Activated CD4-positive, alpha-beta memory T cell treated with anti-CD3 and anti-CD28 coated beads for 36 hours (primary cell): ENCODE measurements at regions of chr22 and their contacts with region 1.

Region 1: GRCh38 chr22:37457093-37457893 is 28.9 kb downstream of the MFNG start:
- DNase-seq: peak; percentile 89
- H3K4me3 Mint-ChIP-seq: no peak overlapping the region
- H3K27ac Mint-ChIP-seq: no peak overlapping the region
- H3K4me1 Mint-ChIP-seq: no peaks in the 10 kb centered on the region
- H3K27me3 Mint-ChIP-seq: no peaks in the 10 kb centered on the region

Region 2: DNA sequence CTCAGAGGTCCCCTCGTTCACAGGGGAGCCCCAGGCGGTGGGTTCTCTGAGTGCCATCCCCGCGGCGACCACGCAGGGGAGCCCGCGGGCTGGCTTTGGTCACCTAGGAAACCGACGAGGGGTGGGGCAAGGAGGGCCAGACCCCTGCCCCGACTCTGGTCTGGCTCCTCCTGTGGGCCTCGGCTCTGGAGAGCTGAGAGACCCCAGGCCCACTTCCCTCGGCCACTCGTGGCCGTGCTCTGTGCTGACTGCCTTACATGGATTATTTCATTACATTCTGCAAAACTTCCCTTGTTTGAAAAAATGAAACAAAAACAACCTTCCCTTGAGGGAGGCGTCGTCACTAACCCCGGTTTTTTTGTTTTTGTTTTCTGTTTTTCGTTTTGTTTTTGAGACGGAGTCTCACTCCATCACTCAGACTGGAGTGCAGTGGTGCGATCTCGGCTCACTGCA is 190.1 kb before region 1 on chr22:
- CTCF ChIA-PET with region 1: interaction called, 34 read pairs
- POLR2A ChIA-PET with region 1: no interaction called
- intact Hi-C with region 1: loop called (anchors 1 kb)
- DNase-seq: peak; percentile 81
- H3K4me3 Mint-ChIP-seq: peak overlapping the region; percentile 86
- H3K27ac Mint-ChIP-seq: peak overlapping the region; percentile 92
- H3K4me1 Mint-ChIP-seq: peaks cover 34% of the 10 kb centered on the region
- H3K27me3 Mint-ChIP-seq: no peaks in the 10 kb centered on the region

Region 3: GRCh38 chr22:37316875-37317371 is 140.4 kb before region 1 on chr22:
- CTCF ChIA-PET with region 1: interaction called, 102 read pairs
- POLR2A ChIA-PET with region 1: interaction called, 3 read pairs
- intact Hi-C with region 1: loop called (anchors 1 kb)
- DNase-seq: peak; percentile 83
- H3K4me3 Mint-ChIP-seq: no peak overlapping the region
- H3K27ac Mint-ChIP-seq: no peak overlapping the region
- H3K4me1 Mint-ChIP-seq: peaks cover 29% of the 10 kb centered on the region
- H3K27me3 Mint-ChIP-seq: no peaks in the 10 kb centered on the region

Region 4: DNA sequence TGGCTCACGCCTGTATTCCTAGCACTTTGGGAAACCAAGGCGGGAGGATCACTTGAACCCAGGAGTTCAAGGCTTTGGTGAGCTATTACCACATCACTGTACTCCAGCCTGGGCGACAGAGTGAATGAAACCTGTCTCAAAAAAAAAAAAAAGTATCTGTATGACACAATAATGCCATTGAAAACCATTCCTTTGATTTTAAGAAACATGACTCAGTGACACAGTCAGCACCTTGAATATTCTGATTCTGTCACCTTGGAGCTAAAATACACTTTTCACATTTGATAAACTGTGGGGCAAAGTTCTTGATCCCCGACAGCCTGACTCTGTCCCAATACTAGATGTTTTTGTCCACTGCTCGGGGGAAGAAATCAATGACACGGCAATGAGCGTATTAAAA is 13.3 kb before region 1 on chr22:
- CTCF ChIA-PET with region 1: interaction called, 11 read pairs
- POLR2A ChIA-PET with region 1: no interaction called
- intact Hi-C with region 1: no loop called
- DNase-seq: no peak
- H3K4me3 Mint-ChIP-seq: no peak overlapping the region
- H3K27ac Mint-ChIP-seq: peak overlapping the region; percentile 34
- H3K4me1 Mint-ChIP-seq: peaks cover 16% of the 10 kb centered on the region
- H3K27me3 Mint-ChIP-seq: peaks cover 2% of the 10 kb centered on the region

Region 5: GRCh38 chr22:37498289-37498909 is 41.1 kb after region 1 on chr22:
- CTCF ChIA-PET with region 1: interaction called, 11 read pairs
- POLR2A ChIA-PET with region 1: no interaction called
- intact Hi-C with region 1: no loop called
- DNase-seq: peak; percentile 80
- H3K4me3 Mint-ChIP-seq: no peak overlapping the region
- H3K27ac Mint-ChIP-seq: no peak overlapping the region
- H3K4me1 Mint-ChIP-seq: peaks cover 7% of the 10 kb centered on the region
- H3K27me3 Mint-ChIP-seq: peaks cover 3% of the 10 kb centered on the region